Activated B cell treated with CpG ODN at 0.5 μM for 24 hours (primary cell): ENCODE measurements at regions of chr18 and their contacts with region 1.

Region 1: DNA sequence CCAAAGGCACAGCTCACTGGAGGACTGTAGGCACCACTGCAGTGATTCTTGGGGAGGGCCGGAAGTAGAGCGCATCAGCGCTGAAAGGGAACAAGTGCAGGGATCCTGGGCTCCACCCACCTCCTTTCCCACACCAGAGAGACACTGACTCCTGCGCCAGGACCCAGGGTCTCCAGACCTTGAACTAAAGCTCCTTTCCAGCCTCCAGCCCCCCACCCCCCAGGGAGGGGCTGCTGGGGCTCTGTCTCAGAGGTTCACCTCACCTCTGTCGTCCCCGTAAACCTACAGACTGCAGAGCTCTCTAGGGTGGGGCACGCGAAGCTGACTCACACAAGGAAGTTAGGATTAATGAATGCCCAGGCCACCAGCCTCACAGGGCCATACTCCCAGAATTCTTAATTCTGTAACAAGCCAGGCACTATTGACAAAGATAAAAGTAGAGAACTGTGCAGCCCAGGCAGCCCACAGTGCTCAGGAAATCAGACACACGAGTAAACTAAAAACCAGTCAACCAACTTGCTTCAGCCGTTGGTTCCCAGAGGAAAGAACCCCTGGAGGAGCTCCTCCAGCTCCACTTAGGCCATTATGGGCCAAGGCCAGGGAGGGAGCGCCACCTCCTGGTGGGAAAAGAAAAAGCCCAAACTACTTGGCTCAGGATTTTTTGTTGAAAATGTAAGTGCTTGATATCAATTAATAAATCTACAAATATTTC is 45.1 kb upstream of the ACAA2 start:
- DNase-seq: no peak
- ATAC-seq: no peak
- H3K4me3 Mint-ChIP-seq: no peak overlapping the region
- H3K27ac Mint-ChIP-seq: no peak overlapping the region
- H3K4me1 Mint-ChIP-seq: no peaks in the 10 kb centered on the region
- H3K27me3 Mint-ChIP-seq: no peaks in the 10 kb centered on the region
- CTCF ChIP-seq: no peak

Region 2: DNA sequence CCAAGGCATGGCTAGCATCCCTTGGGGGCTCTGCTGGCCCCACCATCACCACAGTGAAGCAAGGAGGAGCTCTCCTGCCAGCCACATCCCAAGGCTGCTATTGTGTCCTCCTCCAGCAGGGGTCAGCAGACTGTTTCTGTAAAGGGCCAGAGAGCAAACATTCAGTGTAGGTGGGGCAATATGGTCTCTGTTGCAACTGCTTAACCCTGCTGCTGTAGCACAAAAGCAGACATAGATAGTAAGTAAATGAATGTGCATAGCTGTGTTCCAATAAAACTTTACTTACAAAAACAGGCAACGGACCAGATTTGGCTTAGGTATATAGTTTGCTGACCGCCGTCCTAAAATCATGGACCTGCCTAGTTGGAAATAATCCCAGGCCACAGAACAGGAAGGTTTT is 1412.9 kb before region 1 on chr18:
- CTCF ChIA-PET with region 1: no interaction called
- POLR2A ChIA-PET with region 1: no interaction called
- intact Hi-C with region 1: loop called (anchors 1 kb)
- DNase-seq: peak; percentile 41
- ATAC-seq: peak; percentile 82
- H3K4me3 Mint-ChIP-seq: no peak overlapping the region
- H3K27ac Mint-ChIP-seq: no peak overlapping the region
- H3K4me1 Mint-ChIP-seq: peaks cover 2% of the 10 kb centered on the region
- H3K27me3 Mint-ChIP-seq: peaks cover 14% of the 10 kb centered on the region
- CTCF ChIP-seq: no peak

Region 3: GRCh38 chr18:48475635-48476549 is 1382.6 kb before region 1 on chr18:
- CTCF ChIA-PET with region 1: interaction called, 4 read pairs
- POLR2A ChIA-PET with region 1: no interaction called
- intact Hi-C with region 1: loop called (anchors 1 kb)
- DNase-seq: no peak
- ATAC-seq: peak; percentile 37
- H3K4me3 Mint-ChIP-seq: no peak overlapping the region
- H3K27ac Mint-ChIP-seq: no peak overlapping the region
- H3K4me1 Mint-ChIP-seq: no peaks in the 10 kb centered on the region
- H3K27me3 Mint-ChIP-seq: peaks cover 23% of the 10 kb centered on the region
- CTCF ChIP-seq: peak; percentile 30

Region 4: DNA sequence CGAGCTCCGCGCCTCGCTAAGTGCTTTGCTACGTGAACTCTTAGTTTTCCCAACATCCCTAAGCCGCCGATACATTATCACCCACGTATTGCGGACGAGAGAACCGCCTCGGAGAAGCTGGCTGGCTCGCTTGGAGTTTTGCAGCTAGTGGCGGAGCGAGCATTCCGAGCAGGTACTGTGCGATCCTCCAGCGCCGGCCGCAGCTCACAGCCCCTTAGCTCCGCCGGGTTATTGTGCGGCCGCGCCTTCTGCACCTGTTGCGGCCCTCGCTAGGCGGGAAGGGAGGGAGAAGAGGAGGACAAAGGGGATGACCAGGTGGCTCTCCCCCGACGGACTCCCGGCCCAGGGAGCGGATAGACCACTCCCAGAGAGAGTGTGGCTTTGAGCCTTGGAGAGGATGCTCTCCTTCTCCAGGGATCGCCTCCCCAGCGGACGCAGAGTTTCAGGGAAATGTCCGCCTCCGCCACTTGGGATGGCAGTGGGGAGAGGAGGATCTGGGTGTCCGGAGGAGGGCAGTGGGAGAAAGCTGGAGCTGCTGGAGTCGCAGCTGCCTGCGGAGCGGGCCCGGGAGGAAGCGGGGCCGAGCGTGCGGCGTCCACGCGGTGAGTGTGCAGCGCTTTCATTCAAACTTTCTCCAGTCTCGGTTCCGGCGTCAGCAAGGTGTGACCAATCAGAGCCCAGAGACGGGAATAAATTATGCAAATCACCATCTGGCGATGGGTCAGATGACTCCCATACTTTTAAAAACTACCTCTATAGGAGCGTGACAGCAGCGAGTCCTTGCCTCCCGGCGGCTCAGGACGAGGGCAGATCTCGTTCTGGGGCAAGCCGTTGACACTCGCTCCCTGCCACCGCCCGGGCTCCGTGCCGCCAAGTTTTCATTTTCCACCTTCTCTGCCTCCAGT is 296.9 kb before region 1 on chr18 and contains the start of gene LIPG:
- CTCF ChIA-PET with region 1: interaction called, 3 read pairs
- POLR2A ChIA-PET with region 1: no interaction called
- intact Hi-C with region 1: loop called (anchors 1 kb)
- DNase-seq: peak; percentile 15
- ATAC-seq: peak; percentile 61
- H3K4me3 Mint-ChIP-seq: peak within 1 kb of the TSS; percentile 73
- H3K27ac Mint-ChIP-seq: no peak within 1 kb of the TSS
- H3K4me1 Mint-ChIP-seq: peaks cover 32% of the 10 kb centered on the region
- H3K27me3 Mint-ChIP-seq: peaks cover 73% of the 10 kb centered on the region
- CTCF ChIP-seq: no peak
- total RNA-seq, gene LIPG: 0.29 TPM in 1 of 2 replicates, not detected in the other

Region 5: DNA sequence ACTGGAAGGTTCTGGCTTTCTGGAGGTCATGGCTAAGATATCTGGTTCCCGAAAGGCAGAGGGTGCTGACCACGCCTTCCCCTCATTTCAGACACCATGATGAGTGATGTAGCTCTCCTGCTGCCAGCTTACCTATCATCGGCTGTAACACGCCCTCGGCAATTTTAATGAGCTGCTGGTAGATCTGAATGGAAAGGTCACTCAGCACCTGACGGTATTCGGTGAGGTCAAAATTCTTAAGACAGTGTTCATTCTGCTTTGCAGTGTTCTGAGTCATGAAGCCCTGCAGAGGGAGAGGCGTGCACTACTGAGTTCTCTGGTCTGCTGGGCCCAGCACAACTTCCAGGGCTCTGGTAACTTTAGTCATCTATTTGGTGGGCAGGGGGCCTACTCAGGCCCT is 19.5 kb before region 1 on chr18:
- CTCF ChIA-PET with region 1: no interaction called
- POLR2A ChIA-PET with region 1: no interaction called
- intact Hi-C with region 1: no loop called
- DNase-seq: no peak
- ATAC-seq: no peak
- H3K4me3 Mint-ChIP-seq: no peak overlapping the region
- H3K27ac Mint-ChIP-seq: no peak overlapping the region
- H3K4me1 Mint-ChIP-seq: no peaks in the 10 kb centered on the region
- H3K27me3 Mint-ChIP-seq: no peaks in the 10 kb centered on the region
- CTCF ChIP-seq: no peak